Aorta (tissue), 5 donors: ENCODE measurements at regions of chrX and their contacts with region 1.

Region 1: GRCh38 chrX:38166478-38167083 is 54.1 kb downstream of the SRPX start:
- DNase-seq: no peak
- ATAC-seq: no peak
- H3K4me3 ChIP-seq: no peak overlapping the region
- H3K27ac ChIP-seq: no peak overlapping the region
- H3K4me1 ChIP-seq: no peaks in the 10 kb centered on the region
- H3K27me3 ChIP-seq: no peaks in the 10 kb centered on the region

Region 2: GRCh38 chrX:37745354-37745753 is 421.2 kb before region 1 on chrX:
- intact Hi-C with region 1: loop called in 1 of 2 experiments (anchors 10 kb)
- DNase-seq: peak; percentile 86 to 89
- ATAC-seq: peak; percentile 72
- H3K4me3 ChIP-seq: no peak overlapping the region
- H3K27ac ChIP-seq: no peak overlapping the region
- H3K4me1 ChIP-seq: no peaks in the 10 kb centered on the region
- H3K27me3 ChIP-seq: no peaks in the 10 kb centered on the region

Region 3: GRCh38 chrX:37926700-37927099 is 239.9 kb before region 1 on chrX:
- intact Hi-C with region 1: loop called (anchors 5 to 10 kb)
- DNase-seq: no peak
- ATAC-seq: no peak
- H3K4me3 ChIP-seq: no peak overlapping the region
- H3K27ac ChIP-seq: no peak overlapping the region
- H3K4me1 ChIP-seq: no peaks in the 10 kb centered on the region
- H3K27me3 ChIP-seq: no peaks in the 10 kb centered on the region

Region 4: DNA sequence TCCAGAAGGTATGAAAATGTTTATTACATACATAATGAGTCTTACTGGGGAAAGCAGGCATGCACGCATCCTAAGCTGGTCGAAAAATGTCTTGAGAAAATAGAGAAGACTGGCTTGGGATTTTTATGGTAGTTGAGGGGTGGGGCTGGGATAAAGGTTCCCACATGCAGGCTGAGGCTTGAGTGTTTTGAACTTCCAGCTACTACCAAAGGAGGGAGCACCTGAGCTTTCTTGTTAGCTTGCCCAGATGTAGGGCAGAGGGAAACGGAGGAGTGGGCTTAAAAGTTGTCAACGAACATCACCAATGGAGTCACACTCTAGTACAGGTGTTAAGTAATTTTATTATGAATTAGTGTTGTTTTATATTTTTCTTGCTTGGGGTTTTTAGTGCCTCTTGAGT is 93.7 kb after region 1 on chrX:
- intact Hi-C with region 1: no loop called
- DNase-seq: no peak
- ATAC-seq: no peak
- H3K4me3 ChIP-seq: no peak overlapping the region
- H3K27ac ChIP-seq: no peak overlapping the region
- H3K4me1 ChIP-seq: no peaks in the 10 kb centered on the region
- H3K27me3 ChIP-seq: no peaks in the 10 kb centered on the region

Region 5: DNA sequence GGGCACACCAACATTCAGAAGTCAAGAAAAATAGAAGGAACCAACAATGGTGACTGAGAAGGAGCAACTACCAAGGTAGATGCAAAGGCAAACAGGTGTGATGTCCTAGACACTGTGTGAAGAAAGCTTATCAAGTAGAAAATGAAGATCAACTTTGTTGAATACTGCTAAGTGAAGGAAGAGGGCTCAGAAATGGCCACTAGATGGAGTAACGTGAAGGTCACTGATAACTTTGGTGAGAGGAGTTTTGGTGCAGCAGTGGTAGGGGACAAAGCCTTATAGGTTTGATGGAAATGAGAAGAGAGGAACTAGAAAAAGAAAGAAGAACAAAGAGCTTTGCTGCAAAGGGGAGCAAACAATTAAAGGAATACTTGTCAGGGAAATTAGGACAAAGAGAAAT is 209.3 kb after region 1 on chrX:
- intact Hi-C with region 1: no loop called
- DNase-seq: no peak
- ATAC-seq: no peak
- H3K4me3 ChIP-seq: no peak overlapping the region
- H3K27ac ChIP-seq: no peak overlapping the region
- H3K4me1 ChIP-seq: no peaks in the 10 kb centered on the region
- H3K27me3 ChIP-seq: no peaks in the 10 kb centered on the region